Activated CD4-positive, alpha-beta T cell treated with anti-CD3 and anti-CD28 coated beads for 36 hours (primary cell): ENCODE measurements at regions of chr7 and their contacts with region 1.

Region 1: GRCh38 chr7:40134428-40135316 is at the starts of genes MPLKIP and SUGCT:
- DNase-seq: peak; percentile 90
- ATAC-seq: peak; percentile 86
- H3K4me3 Mint-ChIP-seq: peak within 1 kb of the TSS; percentile 80
- H3K27ac Mint-ChIP-seq: peak within 1 kb of the TSS; percentile 92
- H3K4me1 Mint-ChIP-seq: peaks cover 28% of the 10 kb centered on the region
- H3K27me3 Mint-ChIP-seq: peaks cover 3% of the 10 kb centered on the region
- total RNA-seq, gene MPLKIP: 28.5 to 35.2 TPM
- total RNA-seq, gene SUGCT: 1.2 to 1.9 TPM

Region 2: DNA sequence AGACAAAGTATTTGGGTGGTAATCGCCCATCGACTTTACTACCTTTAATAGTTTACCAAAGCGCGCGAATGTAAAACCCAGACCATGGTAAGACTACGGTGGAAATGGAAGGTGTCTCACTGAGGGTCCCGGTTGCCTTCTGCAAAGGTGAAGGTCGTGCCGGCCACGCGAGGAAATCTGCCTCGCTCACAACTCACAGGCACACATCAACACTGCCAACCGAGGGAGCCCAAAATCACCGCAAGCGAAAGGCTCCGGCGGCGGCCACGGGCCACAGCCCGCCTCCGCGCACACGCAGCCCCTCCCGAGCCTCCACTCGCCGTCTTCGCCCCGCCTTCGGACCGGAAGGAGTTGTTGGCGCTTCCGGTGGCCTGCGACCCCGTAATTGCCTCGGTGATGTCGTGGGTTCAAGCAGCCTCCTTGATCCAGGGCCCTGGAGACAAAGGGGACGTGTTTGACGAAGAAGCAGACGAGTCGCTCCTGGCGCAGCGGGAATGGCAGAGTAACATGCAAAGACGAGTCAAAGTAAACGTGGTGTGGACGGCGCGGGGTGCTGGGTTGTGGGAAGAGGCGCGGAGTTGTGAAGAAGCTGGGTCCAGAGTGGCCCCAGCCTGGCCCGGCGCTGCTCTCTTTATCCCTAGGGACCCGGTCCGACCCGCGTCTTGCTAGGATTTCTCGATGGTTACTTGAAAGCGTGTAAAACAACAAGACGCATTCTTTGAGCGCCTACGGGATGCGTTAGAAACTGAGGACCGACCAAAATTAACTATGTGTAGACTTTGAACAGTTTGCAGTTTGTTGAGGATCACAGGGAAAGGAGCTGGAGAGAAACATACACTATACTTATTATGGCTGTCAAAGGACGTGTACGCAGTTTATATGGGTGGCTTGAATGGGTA is 568.4 kb before region 1 on chr7 and contains the start of gene YAE1:
- CTCF ChIA-PET with region 1: no interaction called
- POLR2A ChIA-PET with region 1: no interaction called
- intact Hi-C with region 1: loop called (anchors 1 to 5 kb)
- DNase-seq: peak; percentile 89
- ATAC-seq: peak; percentile 95
- H3K4me3 Mint-ChIP-seq: peak within 1 kb of the TSS; percentile 96
- H3K27ac Mint-ChIP-seq: peak within 1 kb of the TSS; percentile 98
- H3K4me1 Mint-ChIP-seq: peaks cover 14% of the 10 kb centered on the region
- H3K27me3 Mint-ChIP-seq: no peaks in the 10 kb centered on the region
- total RNA-seq, gene YAE1: 9.8 to 13.5 TPM

Region 3: GRCh38 chr7:39811161-39811614 is 323.5 kb before region 1 on chr7:
- CTCF ChIA-PET with region 1: no interaction called
- POLR2A ChIA-PET with region 1: no interaction called
- intact Hi-C with region 1: no loop called
- DNase-seq: no peak
- ATAC-seq: no peak
- H3K4me3 Mint-ChIP-seq: no peak overlapping the region
- H3K27ac Mint-ChIP-seq: no peak overlapping the region
- H3K4me1 Mint-ChIP-seq: no peaks in the 10 kb centered on the region
- H3K27me3 Mint-ChIP-seq: peaks cover 10% of the 10 kb centered on the region

Region 4: DNA sequence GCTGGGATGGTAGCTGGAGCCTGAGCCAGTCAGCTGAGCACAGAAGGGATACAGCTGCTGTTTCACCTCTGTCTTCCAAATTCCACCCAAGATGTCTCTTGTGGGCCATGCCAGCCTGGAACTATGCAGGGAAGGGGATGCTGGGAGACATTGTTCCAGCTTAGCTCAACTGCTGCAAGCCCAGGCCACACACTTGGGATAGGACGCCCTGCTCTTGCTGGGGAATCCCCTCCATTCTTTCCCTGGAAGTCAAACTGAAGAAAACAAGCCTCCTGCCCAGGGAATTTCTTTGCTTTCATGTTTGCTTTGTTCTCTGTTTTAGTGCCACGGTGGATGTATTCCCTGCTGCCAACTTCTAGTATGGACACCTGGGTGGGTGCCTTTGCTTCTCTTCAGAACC is 239.8 kb before region 1 on chr7:
- CTCF ChIA-PET with region 1: interaction called, 5 read pairs
- POLR2A ChIA-PET with region 1: no interaction called
- intact Hi-C with region 1: loop called (anchors 1 to 10 kb)
- DNase-seq: no peak
- ATAC-seq: no peak
- H3K4me3 Mint-ChIP-seq: no peak overlapping the region
- H3K27ac Mint-ChIP-seq: no peak overlapping the region
- H3K4me1 Mint-ChIP-seq: no peaks in the 10 kb centered on the region
- H3K27me3 Mint-ChIP-seq: peaks cover under 1% of the 10 kb centered on the region

Region 5: DNA sequence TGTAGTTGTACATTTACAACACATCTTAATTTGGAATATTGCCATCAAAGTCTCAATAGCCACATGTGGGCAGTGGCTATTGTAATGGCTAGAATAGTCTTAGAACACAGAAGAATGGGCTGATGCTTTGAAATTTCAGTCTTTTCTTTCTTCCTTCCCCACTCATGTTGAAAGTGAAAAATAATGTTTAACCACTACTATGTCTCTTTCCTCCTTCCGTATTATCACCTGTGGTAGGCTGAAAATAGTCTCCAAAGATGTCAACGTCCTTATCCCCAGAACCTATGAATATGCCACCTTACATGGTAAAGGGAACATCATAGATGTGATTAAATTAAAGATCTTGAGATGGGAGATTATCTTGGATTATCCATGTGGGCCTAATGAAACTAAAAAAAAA is 154.2 kb after region 1 on chr7:
- CTCF ChIA-PET with region 1: no interaction called
- POLR2A ChIA-PET with region 1: no interaction called
- intact Hi-C with region 1: no loop called
- DNase-seq: no peak
- ATAC-seq: no peak
- H3K4me3 Mint-ChIP-seq: no peak overlapping the region
- H3K27ac Mint-ChIP-seq: no peak overlapping the region
- H3K4me1 Mint-ChIP-seq: no peaks in the 10 kb centered on the region
- H3K27me3 Mint-ChIP-seq: no peaks in the 10 kb centered on the region